ENCODE measurements at regions of chr11 and their contacts with region 1.

Region 1: GRCh38 chr11:32176223-32176934 is 85.5 kb downstream of the RCN1 start:
- DNase-seq: peak; percentile 100
- H3K4me3 ChIP-seq: no peak overlapping the region
- H3K27ac ChIP-seq: no peak overlapping the region
- H3K4me1 ChIP-seq: peaks cover 4% of the 10 kb centered on the region
- H3K27me3 ChIP-seq: peaks cover 38% of the 10 kb centered on the region
- CTCF ChIP-seq: peak; percentile 100

Region 2: GRCh38 chr11:30960387-30960992 is 1215.9 kb before region 1 on chr11:
- CTCF ChIA-PET with region 1: no interaction called
- POLR2A ChIA-PET with region 1: no interaction called
- intact Hi-C with region 1: loop called (anchors 5 kb)
- DNase-seq: peak; percentile 86
- H3K4me3 ChIP-seq: no peak overlapping the region
- H3K27ac ChIP-seq: no peak overlapping the region
- H3K4me1 ChIP-seq: no peaks in the 10 kb centered on the region
- H3K27me3 ChIP-seq: peaks cover 52% of the 10 kb centered on the region
- CTCF ChIP-seq: peak; percentile 99

Region 3: GRCh38 chr11:31340903-31341572 is 835.3 kb before region 1 on chr11:
- CTCF ChIA-PET with region 1: interaction called, 3 read pairs
- POLR2A ChIA-PET with region 1: no interaction called
- intact Hi-C with region 1: loop called (anchors 5 kb)
- DNase-seq: peak; percentile 80
- H3K4me3 ChIP-seq: no peak overlapping the region
- H3K27ac ChIP-seq: no peak overlapping the region
- H3K4me1 ChIP-seq: no peaks in the 10 kb centered on the region
- H3K27me3 ChIP-seq: peaks cover 71% of the 10 kb centered on the region
- CTCF ChIP-seq: peak; percentile 99

Region 4: GRCh38 chr11:31641477-31642062 is 534.8 kb before region 1 on chr11:
- CTCF ChIA-PET with region 1: interaction called, 5 read pairs
- POLR2A ChIA-PET with region 1: no interaction called
- intact Hi-C with region 1: loop called (anchors 2 kb)
- DNase-seq: peak; percentile 74
- H3K4me3 ChIP-seq: no peak overlapping the region
- H3K27ac ChIP-seq: no peak overlapping the region
- H3K4me1 ChIP-seq: peaks cover 11% of the 10 kb centered on the region
- H3K27me3 ChIP-seq: no peaks in the 10 kb centered on the region
- CTCF ChIP-seq: peak; percentile 99

Region 5: DNA sequence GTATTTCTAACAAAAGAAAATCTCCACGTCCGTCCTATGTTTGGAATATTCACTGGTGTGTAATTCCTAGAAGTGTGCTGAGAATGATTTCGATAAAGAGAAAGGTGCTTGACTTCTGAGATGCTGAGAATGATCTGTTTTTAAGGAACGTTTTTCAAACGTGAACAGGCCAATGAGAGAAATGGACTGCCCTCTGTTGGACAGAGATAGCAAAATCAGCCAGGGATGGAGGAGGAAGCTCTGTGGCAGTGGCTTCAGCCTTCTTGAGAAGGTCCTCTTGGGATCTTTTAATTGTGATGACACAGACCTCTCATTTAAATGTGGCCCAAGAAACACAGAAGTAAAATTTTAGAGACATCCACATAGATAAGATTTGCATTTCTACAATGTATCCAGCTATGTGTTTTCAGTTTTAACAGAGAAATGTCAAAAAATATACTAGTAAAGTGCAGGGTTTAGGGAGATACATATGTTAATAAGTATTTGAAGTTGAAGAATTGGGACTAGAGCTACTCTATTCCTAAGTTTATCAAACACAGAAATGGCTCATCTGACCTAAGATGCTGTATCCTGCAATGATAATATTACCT is 169.5 kb before region 1 on chr11:
- CTCF ChIA-PET with region 1: interaction called, 8 read pairs
- POLR2A ChIA-PET with region 1: no interaction called
- intact Hi-C with region 1: loop called (anchors 1 kb)
- DNase-seq: peak; percentile 89
- H3K4me3 ChIP-seq: no peak overlapping the region
- H3K27ac ChIP-seq: no peak overlapping the region
- H3K4me1 ChIP-seq: no peaks in the 10 kb centered on the region
- H3K27me3 ChIP-seq: peaks cover 91% of the 10 kb centered on the region
- CTCF ChIP-seq: peak; percentile 100

Region 6: DNA sequence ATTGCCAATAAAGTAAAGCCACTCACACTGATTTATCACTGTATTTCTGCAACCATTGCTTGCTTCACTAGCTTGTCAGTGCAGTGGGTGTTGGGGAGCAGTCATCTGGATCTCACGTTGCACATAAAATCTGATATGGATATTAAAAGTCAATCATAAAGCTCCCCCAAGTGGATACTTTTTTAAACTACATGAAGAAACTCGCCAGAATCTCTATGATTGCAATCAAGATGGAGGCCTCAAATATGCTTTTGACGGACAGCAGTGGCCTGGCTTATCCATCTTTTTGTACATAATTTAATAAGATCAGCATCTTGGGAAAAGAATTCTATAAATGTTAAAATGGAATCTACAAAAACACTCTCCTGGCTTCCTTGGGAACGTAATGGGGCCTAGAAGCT is 121.2 kb after region 1 on chr11:
- CTCF ChIA-PET with region 1: interaction called, 13 read pairs
- POLR2A ChIA-PET with region 1: no interaction called
- intact Hi-C with region 1: loop called (anchors 1 kb)
- DNase-seq: peak; percentile 90
- H3K4me3 ChIP-seq: no peak overlapping the region
- H3K27ac ChIP-seq: no peak overlapping the region
- H3K4me1 ChIP-seq: no peaks in the 10 kb centered on the region
- H3K27me3 ChIP-seq: no peaks in the 10 kb centered on the region
- CTCF ChIP-seq: peak; percentile 88

Measured in A673 (cell line).